ENCODE measurements at regions of chr5 and their contacts with region 1.

Region 1: GRCh38 chr5:151126199-151126645 is 31.4 kb downstream of the ANXA6 start:
- DNase-seq: peak in 4 of 5 donors; percentile 65 to 73 (median 66)
- H3K4me3 ChIP-seq: no peak overlapping the region
- H3K4me3 Mint-ChIP-seq: peak overlapping the region in 4 of 8 donors; percentile 43 to 54 (median 52)
- H3K27ac ChIP-seq: peak overlapping the region; percentile 47
- H3K27ac Mint-ChIP-seq: peak overlapping the region; percentile 78 to 96 (median 91)
- H3K4me1 ChIP-seq: peaks cover 35% of the 10 kb centered on the region
- H3K4me1 Mint-ChIP-seq: peaks cover 30 to 54% (median 43%) of the 10 kb centered on the region in 4 donors
- H3K27me3 ChIP-seq: no peaks in the 10 kb centered on the region
- H3K27me3 Mint-ChIP-seq: no peaks in the 10 kb centered on the region

Region 2: GRCh38 chr5:150751096-150751891 is 374.9 kb before region 1 on chr5:
- CTCF ChIA-PET with region 1: no interaction called
- POLR2A ChIA-PET with region 1: no interaction called
- intact Hi-C with region 1: no loop called
- DNase-seq: no peak
- H3K4me3 ChIP-seq: no peak overlapping the region
- H3K4me3 Mint-ChIP-seq: peak overlapping the region in 1 of 8 donors; percentile 2
- H3K27ac ChIP-seq: no peak overlapping the region
- H3K27ac Mint-ChIP-seq: peak overlapping the region in 4 of 7 donors; percentile 32 to 68 (median 39)
- H3K4me1 ChIP-seq: peaks cover 36% of the 10 kb centered on the region
- H3K4me1 Mint-ChIP-seq: peaks cover 40 to 55% (median 48%) of the 10 kb centered on the region in 4 donors
- H3K27me3 ChIP-seq: no peaks in the 10 kb centered on the region
- H3K27me3 Mint-ChIP-seq: no peaks in the 10 kb centered on the region

Region 3: DNA sequence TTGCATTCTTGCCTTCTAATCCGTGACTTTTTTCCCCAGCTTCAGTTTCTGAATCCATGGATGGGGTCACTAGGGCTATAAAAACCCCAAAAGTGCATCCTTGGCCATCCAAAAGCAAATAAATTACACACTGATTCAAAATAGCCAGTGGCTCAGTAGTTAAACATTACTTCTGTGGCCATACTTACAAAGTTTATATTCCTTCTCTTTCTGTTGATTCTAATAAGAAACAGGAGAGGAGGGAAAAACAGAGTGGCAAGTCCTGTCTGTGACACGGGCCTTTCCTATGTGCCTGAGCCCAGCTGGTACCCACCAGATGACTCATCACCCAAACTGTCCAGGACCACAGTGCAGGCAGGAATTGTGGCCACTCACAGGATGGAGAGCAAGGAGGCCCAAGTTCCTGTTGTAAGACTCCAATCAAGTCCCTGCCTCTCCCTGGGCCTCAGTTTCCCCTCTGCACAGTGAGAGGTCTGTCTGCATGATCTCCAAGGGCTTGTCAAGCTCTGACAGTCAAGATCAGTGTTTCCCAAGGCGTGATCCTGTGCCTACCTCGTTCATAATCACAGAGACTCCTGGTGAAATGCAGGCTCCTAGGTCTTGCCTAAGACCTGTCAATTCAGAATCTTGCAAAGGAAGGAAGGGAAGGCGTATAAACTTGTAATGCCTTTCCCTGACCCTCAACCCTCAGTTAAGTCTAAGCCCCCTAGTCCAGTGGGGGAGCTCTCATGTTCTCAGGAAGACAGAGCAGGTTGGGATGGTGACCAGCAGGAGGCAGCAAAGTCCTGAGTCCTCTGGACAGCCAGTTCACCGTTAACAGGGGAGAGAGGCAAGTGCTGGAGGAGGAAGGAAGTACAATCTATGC is 74.9 kb before region 1 on chr5:
- CTCF ChIA-PET with region 1: interaction called, 601 read pairs
- POLR2A ChIA-PET with region 1: no interaction called
- intact Hi-C with region 1: no loop called
- DNase-seq: peak; percentile 53 to 70 (median 59)
- H3K4me3 ChIP-seq: no peak overlapping the region
- H3K4me3 Mint-ChIP-seq: no peak overlapping the region
- H3K27ac ChIP-seq: no peak overlapping the region
- H3K27ac Mint-ChIP-seq: peak overlapping the region; percentile 24 to 85 (median 62)
- H3K4me1 ChIP-seq: no peaks in the 10 kb centered on the region
- H3K4me1 Mint-ChIP-seq: peaks cover 5 to 17% (median 6%) of the 10 kb centered on the region in 4 donors
- H3K27me3 ChIP-seq: no peaks in the 10 kb centered on the region
- H3K27me3 Mint-ChIP-seq: no peaks in the 10 kb centered on the region

Region 4: GRCh38 chr5:151141535-151141934 is 15.3 kb after region 1 on chr5:
- CTCF ChIA-PET with region 1: interaction called, 2,066 read pairs
- POLR2A ChIA-PET with region 1: interaction called, 249 read pairs
- intact Hi-C with region 1: loop called (anchors 1 kb)
- DNase-seq: peak; percentile 47 to 84 (median 58)
- H3K4me3 ChIP-seq: peak overlapping the region in 1 of 2 donors; percentile 23
- H3K4me3 Mint-ChIP-seq: peak overlapping the region; percentile 71 to 91 (median 84)
- H3K27ac ChIP-seq: peak overlapping the region; percentile 68
- H3K27ac Mint-ChIP-seq: peak overlapping the region; percentile 90 to 97 (median 94)
- H3K4me1 ChIP-seq: peaks cover 91% of the 10 kb centered on the region
- H3K4me1 Mint-ChIP-seq: peaks cover 75 to 100% (median 94%) of the 10 kb centered on the region in 4 donors
- H3K27me3 ChIP-seq: no peaks in the 10 kb centered on the region
- H3K27me3 Mint-ChIP-seq: no peaks in the 10 kb centered on the region

Region 5: GRCh38 chr5:151164686-151165392 is 38.6 kb after region 1 on chr5:
- CTCF ChIA-PET with region 1: interaction called, 2,066 read pairs
- POLR2A ChIA-PET with region 1: interaction called, 67 read pairs
- intact Hi-C with region 1: loop called (anchors 1 kb)
- DNase-seq: peak; percentile 78 to 84 (median 81)
- H3K4me3 ChIP-seq: no peak overlapping the region
- H3K4me3 Mint-ChIP-seq: peak overlapping the region in 1 of 8 donors; percentile 4
- H3K27ac ChIP-seq: no peak overlapping the region
- H3K27ac Mint-ChIP-seq: peak overlapping the region in 5 of 7 donors; percentile 10 to 75 (median 52)
- H3K4me1 ChIP-seq: no peaks in the 10 kb centered on the region
- H3K4me1 Mint-ChIP-seq: peaks cover 14 to 22% (median 19%) of the 10 kb centered on the region in 4 donors
- H3K27me3 ChIP-seq: no peaks in the 10 kb centered on the region
- H3K27me3 Mint-ChIP-seq: no peaks in the 10 kb centered on the region

Region 6: GRCh38 chr5:151213800-151214613 is 87.8 kb after region 1 on chr5:
- CTCF ChIA-PET with region 1: interaction called, 13 read pairs
- POLR2A ChIA-PET with region 1: interaction called, 3 read pairs
- intact Hi-C with region 1: no loop called
- DNase-seq: peak; percentile 83 to 92 (median 84)
- H3K4me3 ChIP-seq: peak overlapping the region; percentile 49 to 85
- H3K4me3 Mint-ChIP-seq: peak overlapping the region; percentile 86 to 95 (median 88)
- H3K27ac ChIP-seq: peak overlapping the region; percentile 90
- H3K27ac Mint-ChIP-seq: peak overlapping the region; percentile 86 to 99 (median 95)
- H3K4me1 ChIP-seq: peaks cover 98% of the 10 kb centered on the region
- H3K4me1 Mint-ChIP-seq: peaks cover 66 to 93% (median 76%) of the 10 kb centered on the region in 4 donors
- H3K27me3 ChIP-seq: no peaks in the 10 kb centered on the region
- H3K27me3 Mint-ChIP-seq: no peaks in the 10 kb centered on the region

Region 7: GRCh38 chr5:151252762-151253604 is 126.8 kb after region 1 on chr5 and contains the start of gene GM2A:
- CTCF ChIA-PET with region 1: interaction called, 10 read pairs
- POLR2A ChIA-PET with region 1: no interaction called
- intact Hi-C with region 1: no loop called
- DNase-seq: peak; percentile 96 to 99 (median 97)
- H3K4me3 ChIP-seq: peak within 1 kb of the TSS; percentile 64 to 68
- H3K4me3 Mint-ChIP-seq: peak within 1 kb of the TSS; percentile 89 to 97 (median 94)
- H3K27ac ChIP-seq: peak within 1 kb of the TSS; percentile 66
- H3K27ac Mint-ChIP-seq: peak within 1 kb of the TSS; percentile 86 to 96 (median 94)
- H3K4me1 ChIP-seq: peaks cover 37% of the 10 kb centered on the region
- H3K4me1 Mint-ChIP-seq: peaks cover 17 to 59% (median 36%) of the 10 kb centered on the region in 4 donors
- H3K27me3 ChIP-seq: no peaks in the 10 kb centered on the region
- H3K27me3 Mint-ChIP-seq: no peaks in the 10 kb centered on the region
- total RNA-seq, gene GM2A: 20.4 to 23.1 TPM